Prostate gland (tissue), 2 donors: ENCODE measurements at regions of chr10 and their contacts with region 1.

Region 1: GRCh38 chr10:28058746-28059145 is 59.9 kb upstream of the ODAD2 start:
- DNase-seq: no peak
- H3K4me3 ChIP-seq: no peak overlapping the region
- H3K27ac ChIP-seq: no peak overlapping the region
- H3K4me1 ChIP-seq: no peaks in the 10 kb centered on the region
- H3K27me3 ChIP-seq: no peaks in the 10 kb centered on the region
- CTCF ChIP-seq: no peak
- POLR2A ChIP-seq: no peak

Region 2: GRCh38 chr10:28095791-28096378 is 37.1 kb after region 1 on chr10:
- intact Hi-C with region 1: no loop called
- DNase-seq: no peak
- H3K4me3 ChIP-seq: no peak overlapping the region
- H3K27ac ChIP-seq: no peak overlapping the region
- H3K4me1 ChIP-seq: no peaks in the 10 kb centered on the region
- H3K27me3 ChIP-seq: no peaks in the 10 kb centered on the region
- CTCF ChIP-seq: no peak
- POLR2A ChIP-seq: no peak

Region 3: DNA sequence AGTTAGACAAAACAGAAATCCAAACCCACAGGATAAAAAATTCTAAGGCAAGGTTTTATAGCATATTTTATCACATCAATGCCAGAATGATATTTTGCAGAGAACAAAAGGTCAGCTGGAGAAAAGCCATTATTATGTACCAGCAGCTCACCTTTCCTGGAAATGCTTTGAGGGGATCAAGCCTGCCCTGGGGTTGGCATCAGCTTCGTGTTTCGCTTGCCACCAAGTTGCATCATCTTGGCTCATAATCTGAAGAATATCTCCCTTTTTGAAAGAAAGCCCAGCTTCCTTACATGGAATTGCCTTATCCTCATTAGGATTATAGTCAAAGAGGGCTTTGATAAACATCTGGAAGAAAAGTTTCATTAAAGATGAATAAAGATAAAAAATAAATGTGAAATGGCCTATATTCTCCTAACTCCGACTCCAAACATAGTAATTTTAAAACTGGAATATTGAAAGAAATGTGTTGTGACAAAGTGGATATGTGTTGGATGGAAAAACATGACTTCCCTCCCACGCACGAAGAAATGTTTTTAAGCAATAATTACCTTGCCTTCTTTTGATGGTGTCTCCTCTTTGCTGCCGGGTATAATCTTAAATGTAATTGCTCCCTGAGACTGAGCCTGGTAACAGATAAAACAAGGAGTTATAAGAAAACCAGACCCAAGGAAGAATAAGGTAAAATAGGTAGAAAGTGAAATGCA is 61.5 kb after region 1 on chr10:
- intact Hi-C with region 1: loop called (anchors 5 kb)
- DNase-seq: peak; percentile 30
- H3K4me3 ChIP-seq: no peak overlapping the region
- H3K27ac ChIP-seq: peak overlapping the region in 1 of 2 donors; percentile 22
- H3K4me1 ChIP-seq: no peaks in the 10 kb centered on the region
- H3K27me3 ChIP-seq: no peaks in the 10 kb centered on the region
- CTCF ChIP-seq: no peak
- POLR2A ChIP-seq: no peak

Region 4: GRCh38 chr10:29141063-29141462 is 1082.3 kb after region 1 on chr10:
- intact Hi-C with region 1: no loop called
- DNase-seq: no peak
- H3K4me3 ChIP-seq: no peak overlapping the region
- H3K27ac ChIP-seq: no peak overlapping the region
- H3K4me1 ChIP-seq: no peaks in the 10 kb centered on the region
- H3K27me3 ChIP-seq: no peaks in the 10 kb centered on the region
- CTCF ChIP-seq: no peak
- POLR2A ChIP-seq: no peak

Region 5: DNA sequence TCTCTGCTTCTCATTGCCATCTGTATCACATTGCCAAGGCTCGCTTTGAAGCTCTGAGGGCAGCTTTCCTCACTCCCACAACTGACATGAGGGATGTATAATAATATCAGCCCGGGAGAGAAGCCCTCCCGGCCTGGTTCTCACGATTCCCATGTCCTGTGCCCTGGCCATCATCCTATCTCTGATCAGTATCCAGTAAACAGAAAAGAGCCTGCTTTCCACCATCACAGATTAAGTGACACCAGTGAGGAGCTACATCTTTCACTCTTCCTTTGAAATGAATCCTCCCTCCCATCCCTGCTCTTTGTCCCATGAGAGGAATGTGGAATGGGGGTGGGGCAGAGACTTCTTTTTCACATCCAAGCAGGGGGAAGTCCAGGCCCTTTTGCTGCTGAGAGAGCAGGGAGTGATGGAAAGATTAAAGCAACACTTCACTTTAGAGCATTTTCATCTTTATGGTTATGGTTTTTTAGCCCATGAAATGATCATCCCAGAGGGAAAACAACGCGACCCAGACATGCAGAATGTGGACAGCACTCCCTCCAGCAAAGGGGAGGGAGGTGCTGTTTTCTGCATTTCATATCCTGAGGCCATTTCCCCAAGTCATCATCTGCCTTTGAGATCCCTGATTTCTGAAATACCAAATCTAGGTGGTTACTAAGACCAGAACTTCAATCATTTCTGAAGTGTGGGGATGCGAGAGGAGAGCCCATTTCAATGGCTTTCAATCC is 1145.5 kb after region 1 on chr10:
- intact Hi-C with region 1: no loop called
- DNase-seq: no peak
- H3K4me3 ChIP-seq: no peak overlapping the region
- H3K27ac ChIP-seq: no peak overlapping the region
- H3K4me1 ChIP-seq: no peaks in the 10 kb centered on the region
- H3K27me3 ChIP-seq: no peaks in the 10 kb centered on the region
- CTCF ChIP-seq: no peak
- POLR2A ChIP-seq: no peak